WTC11 (cell line): ENCODE measurements at regions of chr3 and their contacts with region 1.

Region 1: DNA sequence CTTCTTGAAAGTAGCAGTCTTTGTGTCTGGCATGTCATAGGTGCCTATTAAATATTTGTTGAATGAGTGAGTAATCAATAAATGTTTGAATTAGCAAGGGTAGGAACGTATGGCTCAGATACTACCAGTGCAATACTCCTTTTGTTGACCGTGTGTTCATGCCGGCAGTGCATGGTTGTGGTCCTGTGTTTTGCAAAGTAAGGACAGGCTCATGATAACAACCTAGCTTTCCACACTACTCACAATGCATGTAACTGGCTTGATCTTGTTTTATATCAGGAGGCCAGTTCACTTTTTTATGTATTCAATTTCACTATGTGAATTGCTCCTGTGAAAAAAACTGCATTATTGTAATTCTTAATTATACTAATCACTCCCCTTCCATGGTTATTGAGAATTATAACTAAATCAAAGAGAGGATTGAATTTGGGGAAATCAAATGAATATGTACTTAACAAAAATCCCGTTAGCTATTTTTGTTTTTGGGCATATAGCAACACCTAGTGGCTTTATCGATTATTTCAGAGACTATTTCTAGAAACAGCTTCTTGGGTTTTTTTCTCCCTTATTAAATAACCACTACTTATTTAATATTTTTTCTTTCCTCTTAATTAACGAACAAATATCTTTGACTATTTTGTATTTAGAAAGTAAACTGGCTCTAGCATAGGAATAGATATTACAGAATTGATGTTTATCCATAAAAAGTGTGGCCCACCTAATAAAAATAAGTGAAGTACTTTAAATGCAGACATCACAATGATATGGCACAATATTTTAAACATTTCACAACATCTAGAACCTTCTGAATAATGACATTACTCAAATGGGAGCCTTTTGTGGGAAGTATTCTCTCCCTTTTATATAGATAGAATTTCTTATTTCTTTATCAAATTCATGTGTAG is 218.5 kb downstream of the BBX start:
- DNase-seq: no peak
- ATAC-seq: no peak
- H3K4me3 Mint-ChIP-seq: no peak overlapping the region
- H3K27ac Mint-ChIP-seq: no peak overlapping the region
- H3K4me1 Mint-ChIP-seq: peaks cover 12% of the 10 kb centered on the region
- H3K27me3 Mint-ChIP-seq: no peaks in the 10 kb centered on the region
- CTCF ChIP-seq: peak; percentile 30; the same call in 1 of the 2 replicates

Region 2: GRCh38 chr3:107578523-107578922 is 162.7 kb before region 1 on chr3:
- CTCF ChIA-PET with region 1: interaction called, 10 read pairs
- POLR2A ChIA-PET with region 1: no interaction called
- DNase-seq: no peak
- ATAC-seq: peak; percentile 92
- H3K4me3 Mint-ChIP-seq: no peak overlapping the region
- H3K27ac Mint-ChIP-seq: peak overlapping the region; percentile 80
- H3K4me1 Mint-ChIP-seq: peaks cover 39% of the 10 kb centered on the region
- H3K27me3 Mint-ChIP-seq: no peaks in the 10 kb centered on the region
- CTCF ChIP-seq: no peak

Region 3: GRCh38 chr3:107710851-107711250 is 30.4 kb before region 1 on chr3:
- CTCF ChIA-PET with region 1: no interaction called
- POLR2A ChIA-PET with region 1: no interaction called
- DNase-seq: no peak
- ATAC-seq: peak; percentile 51; the same call in 1 of the 2 replicates
- H3K4me3 Mint-ChIP-seq: no peak overlapping the region
- H3K27ac Mint-ChIP-seq: no peak overlapping the region
- H3K4me1 Mint-ChIP-seq: peaks cover 5% of the 10 kb centered on the region
- H3K27me3 Mint-ChIP-seq: no peaks in the 10 kb centered on the region
- CTCF ChIP-seq: no peak

Region 4: DNA sequence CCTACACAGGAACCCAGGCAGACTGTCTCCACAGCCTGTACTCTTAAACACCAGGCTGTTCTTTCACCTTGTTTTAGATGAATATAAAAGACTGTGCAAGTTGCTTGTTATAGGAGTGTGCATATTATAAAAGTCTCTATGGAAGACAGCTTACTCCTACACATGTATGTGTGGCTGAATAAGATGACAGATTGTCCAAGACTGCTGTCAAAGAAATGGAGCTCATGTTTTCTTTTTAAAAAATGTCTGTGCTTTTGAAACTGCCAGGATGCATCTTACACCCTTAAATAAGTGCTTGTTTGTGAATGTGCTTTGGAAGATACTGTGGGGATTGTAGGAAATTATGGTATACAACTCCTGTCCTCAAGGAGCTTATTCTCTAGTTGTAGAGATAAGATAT is 18.9 kb after region 1 on chr3:
- CTCF ChIA-PET with region 1: no interaction called
- POLR2A ChIA-PET with region 1: no interaction called
- DNase-seq: no peak
- ATAC-seq: no peak
- H3K4me3 Mint-ChIP-seq: no peak overlapping the region
- H3K27ac Mint-ChIP-seq: no peak overlapping the region
- H3K4me1 Mint-ChIP-seq: no peaks in the 10 kb centered on the region
- H3K27me3 Mint-ChIP-seq: no peaks in the 10 kb centered on the region
- CTCF ChIP-seq: no peak